HepG2 (cell line): ENCODE measurements at regions of chr13 and their contacts with region 1.

Region 1: GRCh38 chr13:35720690-35721554 is 244.4 kb upstream of the MAB21L1 start:
- DNase-seq: peak; percentile 31
- ATAC-seq: peak; percentile 91
- H3K4me3 ChIP-seq: peak overlapping the region in 1 of 3 experiments; percentile 30; a peak in 1 of 6 replicates
- H3K27ac ChIP-seq: no peak overlapping the region
- H3K4me1 ChIP-seq: no peaks in the 10 kb centered on the region
- H3K27me3 ChIP-seq: peaks cover 0 to 20% of the 10 kb centered on the region in 2 experiments; a peak in 1 of 5 replicates
- CTCF ChIP-seq: peak; percentile 90
- EP300 ChIP-seq: no peak
- POLR2A ChIP-seq: no peak
- RAD21 ChIP-seq: peak; percentile 79

Region 2: DNA sequence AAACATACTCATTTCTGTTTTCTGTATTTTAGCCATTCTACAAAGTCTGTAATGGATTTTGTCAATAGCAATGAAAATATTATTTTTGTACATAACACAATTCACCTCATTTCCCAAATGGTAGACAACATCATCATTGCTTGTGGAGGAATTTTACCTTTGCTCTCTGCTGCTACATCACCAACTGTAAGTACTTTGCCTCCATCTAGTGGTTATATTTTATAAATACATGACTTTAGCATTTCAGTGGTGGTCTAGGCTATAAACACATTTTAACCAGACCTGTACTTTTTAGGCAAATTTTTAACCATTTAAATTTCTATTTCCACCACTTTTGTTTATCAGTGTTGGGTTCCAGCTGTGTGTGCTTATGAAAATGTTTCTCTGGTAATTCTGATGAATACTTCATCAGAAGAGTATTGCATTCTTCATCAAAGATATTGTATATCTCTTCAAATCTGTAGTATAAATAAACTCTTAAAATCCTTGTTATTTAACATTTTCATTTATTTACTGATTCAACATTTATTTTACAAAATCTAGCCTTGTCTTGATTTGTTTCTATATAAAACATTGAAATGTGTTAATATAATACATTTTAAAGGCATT is 556.5 kb before region 1 on chr13:
- CTCF ChIA-PET with region 1: interaction called, 5 read pairs
- POLR2A ChIA-PET with region 1: no interaction called
- in situ Hi-C with region 1: no loop called
- intact Hi-C with region 1: loop called (anchors 1 kb)
- DNase-seq: peak; percentile 20
- ATAC-seq: peak; percentile 80
- H3K4me3 ChIP-seq: no peak overlapping the region
- H3K27ac ChIP-seq: no peak overlapping the region
- H3K4me1 ChIP-seq: no peaks in the 10 kb centered on the region
- H3K27me3 ChIP-seq: no peaks in the 10 kb centered on the region
- CTCF ChIP-seq: peak; percentile 68
- EP300 ChIP-seq: no peak
- POLR2A ChIP-seq: no peak
- RAD21 ChIP-seq: peak; percentile 54; the same call in 1 of the 2 replicates

Region 3: GRCh38 chr13:35210261-35210660 is 510.7 kb before region 1 on chr13:
- CTCF ChIA-PET with region 1: interaction called, 6 read pairs
- POLR2A ChIA-PET with region 1: no interaction called
- in situ Hi-C with region 1: loop called (anchors 25 kb)
- intact Hi-C with region 1: loop called (anchors 2 kb)
- DNase-seq: no peak
- ATAC-seq: no peak
- H3K4me3 ChIP-seq: no peak overlapping the region
- H3K27ac ChIP-seq: no peak overlapping the region
- H3K4me1 ChIP-seq: no peaks in the 10 kb centered on the region
- H3K27me3 ChIP-seq: no peaks in the 10 kb centered on the region
- CTCF ChIP-seq: 0 out of 2 replicates have a peak, but pooled peaks have one; percentile 10
- EP300 ChIP-seq: no peak
- POLR2A ChIP-seq: no peak
- RAD21 ChIP-seq: no peak

Region 4: DNA sequence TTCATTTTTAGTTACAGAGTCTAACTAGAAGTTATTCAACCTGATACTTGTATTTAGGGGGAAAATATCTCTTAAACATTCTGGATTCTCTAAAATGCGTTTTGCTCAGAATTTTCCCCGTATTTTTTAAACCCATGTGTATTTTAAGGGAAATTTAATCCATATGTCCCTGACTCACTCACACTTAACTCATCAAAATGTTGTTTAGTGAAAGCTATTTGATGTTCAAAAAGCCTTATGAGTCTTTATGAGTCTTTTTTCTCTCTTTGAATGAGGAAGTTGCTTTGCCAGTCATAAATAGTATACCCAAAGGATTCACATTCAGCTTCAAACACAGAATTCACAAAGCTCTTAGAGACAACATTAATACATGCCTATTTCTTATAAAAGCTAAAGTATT is 260.9 kb before region 1 on chr13:
- CTCF ChIA-PET with region 1: no interaction called
- POLR2A ChIA-PET with region 1: no interaction called
- in situ Hi-C with region 1: no loop called
- intact Hi-C with region 1: no loop called
- DNase-seq: no peak
- ATAC-seq: no peak
- H3K4me3 ChIP-seq: no peak overlapping the region
- H3K27ac ChIP-seq: no peak overlapping the region
- H3K4me1 ChIP-seq: no peaks in the 10 kb centered on the region
- H3K27me3 ChIP-seq: no peaks in the 10 kb centered on the region
- CTCF ChIP-seq: no peak
- EP300 ChIP-seq: no peak
- POLR2A ChIP-seq: no peak
- RAD21 ChIP-seq: no peak

Region 5: GRCh38 chr13:35630551-35631275 is 90.2 kb before region 1 on chr13:
- CTCF ChIA-PET with region 1: interaction called, 13 read pairs
- POLR2A ChIA-PET with region 1: no interaction called
- in situ Hi-C with region 1: no loop called
- intact Hi-C with region 1: loop called (anchors 1 kb)
- DNase-seq: peak; percentile 52
- ATAC-seq: peak; percentile 100
- H3K4me3 ChIP-seq: no peak overlapping the region
- H3K27ac ChIP-seq: no peak overlapping the region
- H3K4me1 ChIP-seq: peaks cover 4% of the 10 kb centered on the region; the same call in 1 of the 2 replicates
- H3K27me3 ChIP-seq: no peaks in the 10 kb centered on the region
- CTCF ChIP-seq: peak; percentile 67
- EP300 ChIP-seq: no peak
- POLR2A ChIP-seq: no peak
- RAD21 ChIP-seq: no peak

Region 6: DNA sequence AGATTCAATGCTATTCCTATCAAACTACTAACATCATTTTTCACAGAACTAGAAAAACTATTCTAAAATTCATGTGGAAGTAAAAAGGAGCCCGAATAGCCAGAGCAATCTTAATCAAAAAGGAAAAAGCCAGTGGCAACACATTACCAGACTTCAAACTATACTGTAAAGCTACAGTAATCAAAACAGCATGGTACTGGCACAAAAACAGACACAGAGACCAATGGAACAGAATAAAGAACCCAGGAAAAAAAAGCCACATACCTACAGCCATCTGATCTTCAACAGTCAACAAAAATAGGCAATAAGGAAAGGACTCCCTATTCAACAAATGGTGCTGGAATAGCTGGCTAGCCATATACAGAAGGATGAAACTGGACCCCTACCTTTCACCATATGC is 503.8 kb after region 1 on chr13:
- CTCF ChIA-PET with region 1: no interaction called
- POLR2A ChIA-PET with region 1: no interaction called
- in situ Hi-C with region 1: no loop called
- intact Hi-C with region 1: no loop called
- DNase-seq: no peak
- ATAC-seq: no peak
- H3K4me3 ChIP-seq: no peak overlapping the region
- H3K27ac ChIP-seq: no peak overlapping the region
- H3K4me1 ChIP-seq: no peaks in the 10 kb centered on the region
- H3K27me3 ChIP-seq: no peaks in the 10 kb centered on the region
- CTCF ChIP-seq: no peak
- EP300 ChIP-seq: no peak
- POLR2A ChIP-seq: no peak
- RAD21 ChIP-seq: no peak